ENCODE measurements at regions of chr12 and their contacts with region 1.

Region 1: GRCh38 chr12:124318295-124319020 is 23.6 kb downstream of the RFLNA start:
- DNase-seq: no peak

Region 2: DNA sequence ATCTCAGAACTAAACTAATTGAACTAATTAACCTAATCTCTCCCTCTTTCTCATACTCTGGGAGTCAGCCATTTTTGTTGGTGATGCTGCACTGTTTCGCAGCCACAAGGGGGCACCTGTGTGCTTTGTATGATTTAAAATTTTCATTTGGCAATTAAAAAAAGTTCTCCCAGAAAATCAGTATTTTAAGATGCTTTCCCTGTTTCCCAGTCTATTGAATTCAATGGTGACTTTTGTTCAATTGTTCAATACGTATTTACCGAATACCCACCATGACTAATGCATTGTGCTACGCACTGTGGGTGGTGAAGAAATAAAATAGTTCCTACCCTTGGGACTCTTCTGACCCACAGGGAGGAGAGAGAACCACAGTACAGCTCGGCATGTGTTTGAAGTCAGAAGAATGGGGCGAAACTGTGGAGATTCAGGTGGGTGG is 281.8 kb before region 1 on chr12:
- intact Hi-C with region 1: loop called in 1 of 2 experiments (anchors 5 kb)
- DNase-seq: no peak

Region 3: GRCh38 chr12:124044809-124045321 is 273.6 kb before region 1 on chr12:
- intact Hi-C with region 1: loop called (anchors 5 kb)
- DNase-seq: no peak

Region 4: DNA sequence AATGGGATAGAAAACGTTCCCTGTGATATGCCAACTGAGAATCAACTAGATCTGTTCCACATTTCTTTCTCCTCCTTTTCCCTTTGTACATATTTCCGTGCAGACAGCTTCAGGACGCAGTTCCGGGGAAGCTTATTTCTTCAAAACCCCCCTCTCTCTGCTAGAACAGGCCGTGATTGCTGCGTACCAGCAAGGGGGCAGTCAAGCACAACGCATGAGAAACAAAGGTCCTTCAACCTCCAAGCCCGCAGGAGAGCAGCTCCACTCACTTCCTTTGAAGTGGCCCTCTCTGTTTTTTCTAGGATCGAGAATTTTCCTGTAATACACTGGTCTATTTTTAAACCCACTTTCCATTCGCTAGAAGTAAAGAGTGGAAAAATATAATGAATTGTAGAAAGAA is 264.6 kb before region 1 on chr12:
- intact Hi-C with region 1: loop called (anchors 5 kb)
- DNase-seq: no peak

Region 5: DNA sequence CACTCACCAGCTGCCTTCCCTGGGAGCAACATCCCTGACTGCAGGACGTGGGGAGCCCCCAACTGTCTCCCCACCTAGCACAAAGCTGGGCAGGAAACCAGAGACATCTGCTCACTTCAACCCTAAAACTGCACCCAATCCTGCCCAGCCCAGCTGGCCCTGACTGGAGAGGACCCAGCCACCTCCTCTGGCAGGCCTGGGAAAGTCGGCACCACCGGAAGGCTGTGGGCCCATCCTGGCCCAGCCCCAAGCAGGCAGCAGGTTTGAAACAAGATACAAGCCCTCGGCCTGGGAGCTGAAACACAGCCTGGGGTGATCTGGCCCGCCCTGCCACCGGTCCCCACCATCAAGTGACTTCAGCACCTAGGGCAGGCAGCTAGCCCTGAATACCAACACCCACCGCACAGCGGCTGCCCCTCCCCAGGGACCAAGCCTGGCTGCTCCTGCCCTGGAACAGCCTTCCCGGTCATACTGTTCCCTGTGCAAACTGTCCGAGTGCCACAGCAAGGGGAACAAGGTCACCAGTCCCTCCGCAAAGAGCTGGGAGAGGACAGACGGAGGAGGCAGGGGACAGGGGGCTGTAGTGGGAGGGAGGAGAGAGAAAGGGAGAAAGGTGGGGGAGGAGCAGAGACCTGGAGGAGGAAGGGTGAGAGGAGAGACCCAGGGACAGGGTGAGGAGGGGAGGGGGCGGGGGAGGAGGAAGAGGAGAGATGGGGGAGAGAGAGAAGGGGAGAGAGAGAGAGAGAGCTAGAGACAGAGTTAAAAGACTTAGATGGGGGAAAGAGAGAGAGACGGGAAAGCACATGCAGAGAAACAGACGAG is 92.1 kb after region 1 on chr12:
- intact Hi-C with region 1: no loop called
- DNase-seq: no peak

Measured in posterior vena cava (tissue), 2 donors.